ENCODE measurements at regions of chr1 and their contacts with region 1.

Region 1: GRCh38 chr1:197994907-197995407 is 77.8 kb downstream of the LHX9 start:
- DNase-seq: peak; percentile 78
- H3K4me3 Mint-ChIP-seq: peak overlapping the region; percentile 63
- H3K27ac Mint-ChIP-seq: peak overlapping the region; percentile 94
- H3K4me1 Mint-ChIP-seq: peaks cover 22% of the 10 kb centered on the region
- H3K27me3 Mint-ChIP-seq: no peaks in the 10 kb centered on the region
- CTCF ChIP-seq: no peak

Region 2: GRCh38 chr1:197915862-197916499 is 79.0 kb before region 1 on chr1:
- CTCF ChIA-PET with region 1: no interaction called
- intact Hi-C with region 1: loop called (anchors 5 kb)
- DNase-seq: peak; percentile 88
- H3K4me3 Mint-ChIP-seq: peak overlapping the region; percentile 76
- H3K27ac Mint-ChIP-seq: no peak overlapping the region
- H3K4me1 Mint-ChIP-seq: peaks cover 37% of the 10 kb centered on the region
- H3K27me3 Mint-ChIP-seq: peaks cover 13% of the 10 kb centered on the region
- CTCF ChIP-seq: peak; percentile 72

Region 3: GRCh38 chr1:197955486-197956394 is 39.2 kb before region 1 on chr1:
- CTCF ChIA-PET with region 1: interaction called, 3 read pairs
- intact Hi-C with region 1: loop called (anchors 1 kb)
- DNase-seq: peak; percentile 38
- H3K4me3 Mint-ChIP-seq: peak overlapping the region; percentile 49
- H3K27ac Mint-ChIP-seq: peak overlapping the region; percentile 88
- H3K4me1 Mint-ChIP-seq: peaks cover 87% of the 10 kb centered on the region
- H3K27me3 Mint-ChIP-seq: no peaks in the 10 kb centered on the region
- CTCF ChIP-seq: no peak

Region 4: DNA sequence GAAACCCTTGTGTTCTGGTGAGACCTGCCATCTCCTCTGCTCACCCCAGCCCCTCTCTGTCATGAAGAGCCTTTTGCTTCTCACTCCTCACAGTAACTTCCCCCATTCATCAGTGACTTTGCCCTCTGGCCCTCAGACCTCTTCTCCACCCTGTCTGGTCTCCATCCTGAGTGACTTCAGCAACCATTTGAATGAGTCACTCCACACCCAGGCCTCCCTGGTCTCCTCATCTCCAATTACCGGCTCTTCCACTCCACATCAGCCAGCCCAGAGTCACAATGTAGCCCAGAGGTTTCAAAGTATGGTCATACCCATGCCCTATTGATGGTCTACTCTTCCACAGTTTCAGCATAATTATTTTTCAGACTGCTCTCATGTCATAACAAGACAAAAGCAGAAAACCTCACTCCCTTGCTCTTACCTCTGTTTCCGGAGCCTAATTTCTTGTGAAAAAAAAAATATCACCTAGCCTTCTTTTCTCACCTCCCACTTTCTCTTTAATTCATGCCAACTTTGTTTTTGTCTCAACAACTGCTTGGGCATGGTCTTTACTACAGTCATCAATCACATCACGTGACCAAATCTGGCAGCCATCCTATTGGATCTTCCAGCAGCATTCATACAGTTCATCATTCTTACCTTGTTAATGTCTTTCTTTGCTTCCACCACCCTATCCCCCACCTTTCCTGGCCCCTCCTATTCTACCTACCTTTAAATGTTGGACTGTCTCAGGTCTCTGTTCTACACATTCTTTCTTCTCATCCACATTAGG is 126.3 kb after region 1 on chr1:
- CTCF ChIA-PET with region 1: no interaction called
- intact Hi-C with region 1: loop called (anchors 10 kb)
- DNase-seq: peak; percentile 76
- H3K4me3 Mint-ChIP-seq: no peak overlapping the region
- H3K27ac Mint-ChIP-seq: no peak overlapping the region
- H3K4me1 Mint-ChIP-seq: peaks cover 24% of the 10 kb centered on the region
- H3K27me3 Mint-ChIP-seq: no peaks in the 10 kb centered on the region
- CTCF ChIP-seq: no peak

Region 5: GRCh38 chr1:198258491-198258890 is 263.5 kb after region 1 on chr1:
- CTCF ChIA-PET with region 1: no interaction called
- intact Hi-C with region 1: no loop called
- DNase-seq: no peak
- H3K4me3 Mint-ChIP-seq: no peak overlapping the region
- H3K27ac Mint-ChIP-seq: no peak overlapping the region
- H3K4me1 Mint-ChIP-seq: peaks cover 51% of the 10 kb centered on the region
- H3K27me3 Mint-ChIP-seq: no peaks in the 10 kb centered on the region
- CTCF ChIP-seq: no peak

Region 6: GRCh38 chr1:198416296-198416695 is 421.3 kb after region 1 on chr1:
- CTCF ChIA-PET with region 1: no interaction called
- intact Hi-C with region 1: no loop called
- DNase-seq: no peak
- H3K4me3 Mint-ChIP-seq: no peak overlapping the region
- H3K27ac Mint-ChIP-seq: no peak overlapping the region
- H3K4me1 Mint-ChIP-seq: no peaks in the 10 kb centered on the region
- H3K27me3 Mint-ChIP-seq: no peaks in the 10 kb centered on the region
- CTCF ChIP-seq: no peak